ENCODE measurements at regions of chr10 and their contacts with region 1.

Region 1: GRCh38 chr10:79195091-79195923 is 126.5 kb downstream of the ZMIZ1 start:
- DNase-seq: peak; percentile 88
- ATAC-seq: peak; percentile 78 to 88

Region 2: DNA sequence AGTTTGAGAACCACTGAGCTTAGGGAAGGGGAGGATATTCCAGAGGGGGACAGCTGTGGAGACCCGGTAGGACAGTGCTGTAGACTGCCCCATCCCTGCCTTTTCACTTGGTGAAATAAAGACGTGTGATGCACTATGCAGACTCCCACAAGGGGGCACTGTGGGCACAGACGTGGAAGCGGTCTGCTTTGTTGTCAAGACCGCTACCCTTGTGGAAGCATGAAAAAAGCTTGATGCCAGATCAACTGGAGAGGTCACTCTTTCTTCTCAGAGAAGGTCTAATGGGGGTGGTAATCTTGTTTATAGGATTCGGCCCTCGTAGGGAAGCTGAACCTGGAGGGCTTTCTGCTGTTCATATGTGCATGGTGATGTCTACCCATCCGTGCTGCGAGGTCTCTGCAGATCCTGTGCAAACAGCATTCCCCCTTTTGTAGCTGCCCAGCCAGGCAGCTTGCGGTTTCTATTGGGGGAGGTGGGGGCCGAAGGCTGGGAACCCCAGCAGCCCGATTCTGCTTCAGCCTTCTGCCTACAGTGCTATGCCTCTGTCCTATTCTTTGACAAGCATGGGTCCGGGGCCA is 1147.9 kb before region 1 on chr10:
- intact Hi-C with region 1: loop called in 1 of 2 experiments (anchors 5 kb)
- DNase-seq: peak; percentile 91
- ATAC-seq: peak; percentile 81 to 87

Region 3: DNA sequence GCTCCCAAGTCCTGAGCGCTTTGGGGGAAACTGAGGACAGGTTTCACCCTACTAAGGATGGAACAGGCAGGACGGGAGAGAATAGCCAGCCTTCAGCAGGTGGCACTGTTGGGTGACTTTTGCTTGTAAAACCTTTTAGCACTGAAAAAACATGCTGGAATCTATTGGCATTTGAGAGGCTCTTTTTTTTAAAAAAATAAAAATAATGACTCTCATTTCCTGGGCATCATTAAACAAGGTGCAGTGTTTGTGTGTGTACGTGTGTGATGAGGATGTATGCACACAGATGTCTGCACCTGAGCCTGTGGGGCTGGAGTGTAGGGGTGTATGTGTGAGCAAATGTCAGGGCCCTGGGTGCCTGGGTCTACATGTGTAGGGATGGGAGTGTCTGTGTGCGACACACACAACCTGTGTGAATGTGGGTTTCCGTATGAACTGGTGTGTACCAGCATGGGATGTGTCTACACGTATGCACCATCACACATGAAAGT is 983.7 kb before region 1 on chr10:
- intact Hi-C with region 1: loop called in 1 of 2 experiments (anchors 5 kb)
- DNase-seq: no peak
- ATAC-seq: peak in 1 of 2 donors; percentile 16

Region 4: DNA sequence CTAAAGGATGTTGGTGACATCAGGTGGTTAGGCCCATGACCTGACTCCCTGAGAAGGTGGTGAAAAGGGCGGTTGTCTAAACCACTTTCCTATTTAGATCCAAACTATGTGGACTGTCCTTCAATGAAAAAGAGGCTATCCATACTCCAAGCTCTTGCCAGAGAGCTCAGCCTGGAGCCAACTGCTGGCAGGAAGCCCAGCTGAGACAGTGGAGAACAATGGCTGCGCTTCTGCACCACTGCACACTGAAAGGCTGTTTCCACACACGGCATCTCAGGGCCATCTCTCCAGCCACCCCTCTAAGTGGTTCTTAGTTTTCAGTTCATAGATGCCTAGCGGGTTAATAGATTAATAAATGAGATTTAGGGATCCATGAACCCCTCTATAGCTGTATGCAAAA is 615.3 kb before region 1 on chr10:
- intact Hi-C with region 1: loop called in 1 of 2 experiments (anchors 10 kb)
- DNase-seq: peak; percentile 79
- ATAC-seq: peak; percentile 80 to 82

Region 5: GRCh38 chr10:78852466-78853240 is 342.7 kb before region 1 on chr10:
- intact Hi-C with region 1: loop called (anchors 5 to 10 kb)
- DNase-seq: no peak
- ATAC-seq: no peak

Region 6: DNA sequence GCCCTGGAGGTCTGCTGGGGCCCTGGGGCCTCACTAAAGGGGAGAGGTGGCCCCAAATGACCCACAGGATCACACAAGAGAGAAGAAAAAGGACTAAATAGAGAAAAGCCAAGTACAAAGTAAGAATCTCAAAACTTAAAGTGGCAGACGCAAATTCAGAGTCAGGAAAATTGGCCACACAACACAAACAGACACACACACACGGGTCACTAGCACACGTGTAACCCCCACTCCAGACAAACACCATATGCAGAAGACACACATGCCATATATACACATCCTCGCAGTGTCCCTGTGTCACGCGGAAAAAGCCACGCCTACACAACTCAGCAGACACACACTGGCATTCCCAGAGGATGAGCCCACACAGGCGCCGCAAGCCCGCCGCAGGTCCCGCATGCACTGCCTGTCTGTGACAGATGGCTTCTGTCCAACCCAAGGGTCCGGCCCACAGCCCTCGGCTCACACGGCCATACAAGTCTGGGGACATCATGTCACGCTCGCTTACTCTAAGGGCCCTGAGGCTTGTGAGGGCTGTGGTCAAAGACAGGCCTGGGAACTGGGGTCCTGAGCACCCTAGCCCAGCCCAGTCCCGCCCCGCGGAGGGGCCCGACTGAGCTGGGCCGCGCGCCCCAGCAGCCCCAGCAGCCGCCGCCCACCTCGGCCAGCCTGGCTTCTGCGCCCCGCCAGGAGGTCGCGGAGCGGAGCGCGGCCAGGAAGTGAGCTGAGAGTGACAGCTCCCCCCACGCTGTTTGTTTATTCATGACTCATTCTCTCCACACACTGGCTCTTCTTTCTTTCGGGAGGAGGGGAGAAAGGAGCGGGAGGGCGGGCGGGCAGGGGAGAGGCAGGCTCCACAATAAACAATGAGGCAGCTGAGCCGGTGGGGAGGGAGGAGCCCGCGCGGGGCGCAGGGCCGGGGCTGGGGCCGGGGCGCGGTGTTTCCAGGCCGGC is 222.1 kb before region 1 on chr10:
- intact Hi-C with region 1: loop called in 1 of 2 experiments (anchors 5 kb)
- DNase-seq: peak; percentile 88
- ATAC-seq: peak; percentile 70 to 79

Region 7: GRCh38 chr10:79149662-79150443 is 45.5 kb before region 1 on chr10:
- intact Hi-C with region 1: loop called in 1 of 2 experiments (anchors 5 kb)
- DNase-seq: peak; percentile 92
- ATAC-seq: peak; percentile 47 to 71

Measured in left cardiac atrium (tissue), 4 donors.